Natural killer cell (primary cell): ENCODE measurements at regions of chr6 and their contacts with region 1.

Region 1: DNA sequence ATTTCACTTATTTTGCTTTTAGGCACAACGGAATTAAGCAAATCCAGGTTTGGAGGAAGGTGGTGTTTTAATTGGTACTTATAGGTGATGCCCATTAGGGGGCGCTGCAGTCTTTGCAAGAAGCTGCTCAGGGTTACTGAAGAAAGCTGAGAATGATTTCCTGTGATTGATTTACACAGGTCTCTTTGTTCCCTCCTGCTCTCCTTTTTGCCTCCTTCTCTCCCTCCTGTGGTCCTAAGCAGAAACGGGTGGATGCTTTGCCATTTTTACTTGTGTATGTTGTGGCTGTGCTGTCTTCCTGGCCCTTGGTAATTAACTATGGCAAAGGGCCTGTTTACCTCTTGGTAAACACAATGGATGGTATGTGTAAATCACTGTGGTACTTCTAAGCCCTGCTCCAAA is 97.8 kb downstream of the ANKS1A start:
- DNase-seq: peak; percentile 44 to 81
- ATAC-seq: peak; percentile 66 to 71 (median 69)
- H3K4me3 ChIP-seq: no peak overlapping the region
- H3K4me3 Mint-ChIP-seq: no peak overlapping the region
- H3K27ac ChIP-seq: no peak overlapping the region
- H3K27ac Mint-ChIP-seq: no peak overlapping the region
- H3K4me1 ChIP-seq: no peaks in the 10 kb centered on the region
- H3K4me1 Mint-ChIP-seq: peaks cover 0 to 5% of the 10 kb centered on the region in 2 donors
- H3K27me3 ChIP-seq: no peaks in the 10 kb centered on the region
- H3K27me3 Mint-ChIP-seq: no peaks in the 10 kb centered on the region
- CTCF ChIP-seq: peak; percentile 73

Region 2: DNA sequence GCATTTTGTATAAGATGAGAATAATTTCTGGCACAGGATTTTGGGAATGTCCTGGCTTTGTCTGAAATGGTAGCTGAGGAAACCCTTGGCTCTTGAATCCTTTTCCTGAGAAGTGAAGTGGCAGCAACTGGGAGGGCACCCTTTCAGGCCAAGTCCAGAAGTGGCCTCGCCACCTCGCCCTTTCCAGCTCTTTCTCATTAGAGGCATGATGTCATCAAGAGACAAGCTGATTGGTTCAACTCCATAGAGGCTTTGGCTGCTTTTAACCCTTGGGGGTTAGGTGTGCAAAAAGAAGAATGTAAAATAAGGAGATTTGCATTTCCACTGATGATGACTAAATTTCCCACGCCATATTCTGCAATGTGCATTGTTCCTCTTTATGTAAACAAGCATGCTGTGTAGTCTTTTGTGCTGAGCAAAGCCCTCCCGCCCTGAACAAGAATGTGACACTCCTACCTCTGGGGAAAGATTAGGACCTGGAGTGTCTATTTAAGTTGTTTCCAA is 37.8 kb after region 1 on chr6:
- intact Hi-C with region 1: no loop called
- DNase-seq: no peak
- ATAC-seq: no peak
- H3K4me3 ChIP-seq: no peak overlapping the region
- H3K4me3 Mint-ChIP-seq: no peak overlapping the region
- H3K27ac ChIP-seq: no peak overlapping the region
- H3K27ac Mint-ChIP-seq: no peak overlapping the region
- H3K4me1 ChIP-seq: no peaks in the 10 kb centered on the region
- H3K4me1 Mint-ChIP-seq: peaks cover 15 to 20% of the 10 kb centered on the region in 2 donors
- H3K27me3 ChIP-seq: no peaks in the 10 kb centered on the region
- H3K27me3 Mint-ChIP-seq: no peaks in the 10 kb centered on the region
- CTCF ChIP-seq: no peak

Region 3: GRCh38 chr6:35139908-35140655 is 153.2 kb after region 1 on chr6:
- intact Hi-C with region 1: loop called (anchors 2 kb)
- DNase-seq: peak; percentile 24 to 83
- ATAC-seq: peak in 2 of 3 donors; percentile 36 to 57
- H3K4me3 ChIP-seq: no peak overlapping the region
- H3K4me3 Mint-ChIP-seq: peak overlapping the region; percentile 71
- H3K27ac ChIP-seq: no peak overlapping the region
- H3K27ac Mint-ChIP-seq: peak overlapping the region in 1 of 2 donors; percentile 83
- H3K4me1 ChIP-seq: peaks cover 11% of the 10 kb centered on the region
- H3K4me1 Mint-ChIP-seq: peaks cover 11 to 17% of the 10 kb centered on the region in 2 donors
- H3K27me3 ChIP-seq: peaks cover 2% of the 10 kb centered on the region
- H3K27me3 Mint-ChIP-seq: peaks cover 14 to 27% of the 10 kb centered on the region in 2 donors
- CTCF ChIP-seq: peak; percentile 87

Region 4: DNA sequence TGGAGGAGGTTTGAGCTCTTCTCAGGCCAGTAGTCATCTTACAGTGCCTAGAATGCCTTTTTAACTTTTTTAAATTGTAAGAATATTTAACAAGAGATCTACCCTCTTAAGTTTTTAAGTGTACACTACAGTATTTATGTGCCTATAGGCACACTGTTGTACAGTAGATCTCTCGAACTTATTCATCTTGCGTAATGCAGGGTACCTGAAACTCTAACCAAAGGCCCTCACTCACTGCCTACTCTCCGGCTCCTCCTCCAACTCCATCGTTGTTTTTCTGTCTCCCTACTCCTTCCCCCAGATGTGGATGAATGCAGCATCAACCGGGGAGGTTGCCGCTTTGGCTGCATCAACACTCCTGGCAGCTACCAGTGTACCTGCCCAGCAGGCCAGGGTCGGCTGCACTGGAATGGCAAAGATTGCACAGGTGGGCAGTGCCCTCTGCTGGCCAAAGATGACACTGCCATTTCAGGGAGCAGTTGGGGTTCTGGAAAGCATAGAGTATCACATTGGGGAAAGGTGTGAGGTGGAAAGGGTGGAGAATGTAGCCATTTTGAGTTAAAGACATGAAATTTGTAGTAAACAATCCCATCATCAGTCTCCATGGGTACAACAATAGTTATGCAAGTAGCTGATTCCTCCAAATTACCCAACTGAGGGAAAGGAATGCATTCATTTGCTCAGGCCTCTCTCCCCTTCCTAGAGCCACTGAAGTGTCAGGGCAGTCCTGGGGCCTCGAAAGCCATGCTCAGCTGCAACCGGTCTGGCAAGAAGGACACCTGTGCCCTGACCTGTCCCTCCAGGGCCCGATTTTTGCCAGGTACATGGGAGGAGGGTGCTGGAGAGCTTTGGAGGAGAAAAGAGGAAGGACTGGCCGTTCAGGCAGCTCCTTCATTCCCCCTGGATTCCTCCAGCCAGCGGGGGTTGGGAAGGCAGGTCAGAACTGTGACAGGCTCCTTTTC is 254.3 kb after region 1 on chr6:
- intact Hi-C with region 1: loop called (anchors 1 kb)
- DNase-seq: peak; percentile 66 to 81
- ATAC-seq: peak; percentile 77 to 93 (median 91)
- H3K4me3 ChIP-seq: no peak overlapping the region
- H3K4me3 Mint-ChIP-seq: no peak overlapping the region
- H3K27ac ChIP-seq: no peak overlapping the region
- H3K27ac Mint-ChIP-seq: peak overlapping the region in 1 of 2 donors; percentile 25
- H3K4me1 ChIP-seq: no peaks in the 10 kb centered on the region
- H3K4me1 Mint-ChIP-seq: peaks cover 6 to 20% of the 10 kb centered on the region in 2 donors
- H3K27me3 ChIP-seq: no peaks in the 10 kb centered on the region
- H3K27me3 Mint-ChIP-seq: no peaks in the 10 kb centered on the region
- CTCF ChIP-seq: peak; percentile 95

Region 5: GRCh38 chr6:35253249-35253648 is 266.4 kb after region 1 on chr6:
- intact Hi-C with region 1: no loop called
- DNase-seq: no peak
- ATAC-seq: no peak
- H3K4me3 ChIP-seq: no peak overlapping the region
- H3K4me3 Mint-ChIP-seq: no peak overlapping the region
- H3K27ac ChIP-seq: no peak overlapping the region
- H3K27ac Mint-ChIP-seq: no peak overlapping the region
- H3K4me1 ChIP-seq: peaks cover 3% of the 10 kb centered on the region
- H3K4me1 Mint-ChIP-seq: peaks cover 4 to 24% of the 10 kb centered on the region in 2 donors
- H3K27me3 ChIP-seq: no peaks in the 10 kb centered on the region
- H3K27me3 Mint-ChIP-seq: no peaks in the 10 kb centered on the region
- CTCF ChIP-seq: no peak